Transverse colon (tissue), 4 donors: ENCODE measurements at regions of chr2 and their contacts with region 1.

Region 1: GRCh38 chr2:147017951-147018642 is 826.7 kb upstream of the ACVR2A start:
- DNase-seq: no peak
- H3K4me3 ChIP-seq: no peak overlapping the region
- H3K27ac ChIP-seq: no peak overlapping the region
- H3K4me1 ChIP-seq: no peaks in the 10 kb centered on the region
- H3K27me3 ChIP-seq: no peaks in the 10 kb centered on the region
- CTCF ChIP-seq: no peak
- EP300 ChIP-seq: no peak
- POLR2A ChIP-seq: no peak

Region 2: GRCh38 chr2:146837857-146838256 is 180.2 kb before region 1 on chr2:
- in situ Hi-C with region 1: no loop called
- intact Hi-C with region 1: loop called (anchors 10 kb)
- DNase-seq: no peak
- H3K4me3 ChIP-seq: no peak overlapping the region
- H3K27ac ChIP-seq: no peak overlapping the region
- H3K4me1 ChIP-seq: no peaks in the 10 kb centered on the region
- H3K27me3 ChIP-seq: no peaks in the 10 kb centered on the region
- CTCF ChIP-seq: no peak
- EP300 ChIP-seq: no peak
- POLR2A ChIP-seq: no peak

Region 3: DNA sequence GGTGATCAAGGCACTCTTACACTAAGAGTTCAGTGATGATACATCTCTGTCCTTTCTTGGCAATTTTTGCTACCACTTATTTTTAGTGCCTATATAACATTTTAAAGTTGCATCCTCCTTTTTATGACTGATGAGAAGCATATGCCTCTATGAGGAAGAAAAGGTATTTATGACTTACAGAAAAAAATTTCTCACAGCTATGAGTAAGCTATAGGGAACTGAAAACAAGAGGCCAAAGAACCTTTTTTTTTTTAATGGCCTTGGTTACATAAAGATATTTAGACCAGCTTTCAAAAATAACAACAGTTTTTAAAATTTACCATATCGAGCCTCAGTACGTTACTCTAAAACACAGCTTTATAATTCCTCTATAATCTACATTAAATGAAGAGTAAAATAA is 1024.1 kb after region 1 on chr2:
- in situ Hi-C with region 1: no loop called
- intact Hi-C with region 1: no loop called
- DNase-seq: no peak
- H3K4me3 ChIP-seq: no peak overlapping the region
- H3K27ac ChIP-seq: no peak overlapping the region
- H3K4me1 ChIP-seq: no peaks in the 10 kb centered on the region
- H3K27me3 ChIP-seq: no peaks in the 10 kb centered on the region
- CTCF ChIP-seq: no peak
- EP300 ChIP-seq: no peak
- POLR2A ChIP-seq: no peak